ENCODE measurements at regions of chr5 and their contacts with region 1.

Region 1: DNA sequence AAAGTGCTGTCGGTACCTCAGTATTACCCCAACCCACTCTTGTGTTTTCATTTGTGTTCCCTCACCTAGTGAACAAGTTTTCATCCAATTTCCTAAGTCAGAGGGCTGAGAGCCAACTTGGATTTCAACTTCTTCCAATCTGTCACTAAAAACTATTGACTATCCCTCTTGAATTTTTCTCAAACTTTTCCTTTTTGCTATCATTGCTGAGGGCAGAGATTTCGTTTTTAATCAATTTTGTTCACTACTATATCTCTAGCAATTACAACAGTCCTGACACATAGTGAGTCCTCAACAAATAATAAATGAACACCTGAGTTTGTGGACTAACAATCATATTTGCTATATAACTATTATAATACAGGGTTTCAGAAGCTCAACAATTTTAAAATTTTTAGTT is 29.0 kb downstream of the MEIKIN start:
- DNase-seq: no peak
- ATAC-seq: no peak
- H3K4me3 ChIP-seq: no peak overlapping the region
- H3K27ac ChIP-seq: no peak overlapping the region
- H3K4me1 ChIP-seq: no peaks in the 10 kb centered on the region
- H3K27me3 ChIP-seq: no peaks in the 10 kb centered on the region; a peak in 1 of 4 replicates
- CTCF ChIP-seq: no peak
- EP300 ChIP-seq: no peak
- POLR2A ChIP-seq: no peak
- RAD21 ChIP-seq: no peak

Region 2: DNA sequence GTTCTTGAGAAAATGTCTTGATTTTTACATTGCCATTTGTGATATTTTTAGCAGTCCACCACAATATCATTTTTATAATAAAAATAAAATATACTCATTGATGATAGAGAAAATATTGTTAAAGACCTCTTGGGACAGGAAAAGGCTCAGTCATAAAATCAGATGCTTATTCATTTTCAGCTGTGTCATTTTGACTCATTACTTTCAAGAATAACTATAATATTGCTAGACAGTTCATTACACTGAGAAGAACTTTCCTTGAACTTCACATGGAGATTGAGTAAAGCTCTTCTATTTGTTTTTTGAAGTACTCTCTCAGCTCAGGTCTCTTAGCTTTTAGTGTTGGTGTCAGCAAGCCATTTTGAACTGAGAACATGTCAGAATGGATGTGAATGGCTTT is 37.5 kb after region 1 on chr5:
- CTCF ChIA-PET with region 1: no interaction called
- POLR2A ChIA-PET with region 1: no interaction called
- RAD21 ChIA-PET with region 1: no interaction called
- SMC1A ChIA-PET with region 1: no interaction called
- in situ Hi-C with region 1: no loop called
- intact Hi-C with region 1: loop called (anchors 2 kb)
- DNase-seq: no peak
- ATAC-seq: no peak; the same call in 2 of the 3 replicates
- H3K4me3 ChIP-seq: no peak overlapping the region
- H3K27ac ChIP-seq: no peak overlapping the region
- H3K4me1 ChIP-seq: no peaks in the 10 kb centered on the region
- H3K27me3 ChIP-seq: no peaks in the 10 kb centered on the region
- CTCF ChIP-seq: no peak
- EP300 ChIP-seq: no peak
- POLR2A ChIP-seq: no peak
- RAD21 ChIP-seq: no peak

Measured in GM12878 (cell line).